Brain microvascular endothelial cell (primary cell): ENCODE measurements at regions of chr17 and their contacts with region 1.

Region 1: DNA sequence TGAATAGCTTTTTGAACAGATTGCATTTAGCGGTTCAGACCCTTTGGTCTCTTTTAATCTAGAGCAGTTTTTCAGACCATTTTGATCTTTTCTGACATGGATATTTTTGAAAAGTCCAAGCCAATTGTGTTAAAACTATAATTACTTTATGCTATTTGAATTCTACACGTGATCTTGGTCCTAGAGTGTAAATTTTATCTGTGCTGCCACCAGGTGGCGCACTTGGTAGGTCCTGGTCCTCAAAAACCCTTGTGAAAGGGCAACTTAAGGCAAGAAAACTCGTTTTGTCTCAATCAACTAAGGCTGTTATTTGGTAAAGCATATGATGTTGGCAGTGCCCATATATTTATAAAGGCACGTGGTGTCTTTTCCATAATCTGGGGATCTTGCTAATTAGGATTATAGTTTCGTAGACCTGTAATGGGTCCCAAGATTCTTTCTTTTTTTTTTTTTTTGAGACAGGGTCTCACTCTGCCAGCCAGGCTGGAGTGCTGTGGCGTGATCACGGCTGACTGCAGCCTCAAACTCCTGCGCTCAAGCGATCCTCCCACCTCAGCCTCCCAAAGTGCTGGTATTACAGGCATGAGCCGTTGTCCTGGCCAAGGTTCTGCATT is 43.9 kb upstream of the TEX2 start:
- DNase-seq: peak; percentile 45
- H3K4me3 ChIP-seq: no peak overlapping the region
- H3K27ac ChIP-seq: no peak overlapping the region
- H3K27me3 ChIP-seq: no peaks in the 10 kb centered on the region
- CTCF ChIP-seq: peak; percentile 81

Region 2: GRCh38 chr17:64399071-64399766 is 92.3 kb after region 1 on chr17:
- in situ Hi-C with region 1: loop called (anchors 10 kb)
- DNase-seq: no peak
- H3K4me3 ChIP-seq: no peak overlapping the region
- H3K27ac ChIP-seq: no peak overlapping the region
- H3K27me3 ChIP-seq: no peaks in the 10 kb centered on the region
- CTCF ChIP-seq: no peak

Region 3: DNA sequence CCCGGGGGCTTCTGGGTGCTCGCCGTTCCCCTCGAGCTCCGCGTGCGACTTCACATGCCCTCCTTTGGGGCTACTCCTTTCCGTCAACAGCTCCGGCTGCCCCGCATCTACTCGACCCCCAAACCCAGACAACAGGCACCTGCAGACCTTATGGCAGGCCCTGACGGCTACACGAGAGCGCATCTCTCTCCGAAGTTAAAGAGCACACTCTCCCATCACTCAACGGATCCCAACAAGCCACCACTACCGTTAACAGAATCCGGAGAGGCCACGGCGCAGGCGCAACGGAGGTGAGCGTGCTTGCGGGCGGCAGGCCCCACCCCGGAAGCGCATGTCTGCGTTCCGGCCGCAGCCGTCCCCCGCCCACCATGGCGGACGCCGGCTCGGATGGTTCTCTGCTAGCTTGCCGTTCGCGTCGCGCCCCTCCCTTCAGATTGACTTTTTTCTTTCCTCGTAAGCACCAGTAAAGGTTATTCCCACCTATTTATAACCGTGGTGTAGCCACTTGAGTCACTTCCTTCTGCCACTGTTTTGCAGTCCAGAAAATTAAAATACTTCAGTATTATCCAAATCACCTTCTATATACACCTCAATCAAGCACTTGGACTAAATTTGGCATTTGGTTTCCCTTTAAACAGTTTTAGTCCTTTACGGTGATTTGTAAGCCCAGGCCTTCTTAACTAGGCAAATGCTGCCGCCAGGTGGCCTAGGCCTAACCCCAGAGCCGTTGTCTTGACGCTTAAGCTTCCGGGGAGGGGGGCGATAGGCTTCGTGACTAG is 190.0 kb after region 1 on chr17 and contains the start of gene POLG2:
- in situ Hi-C with region 1: loop called (anchors 10 kb)
- DNase-seq: peak; percentile 87
- H3K4me3 ChIP-seq: peak within 1 kb of the TSS; percentile 83
- H3K27ac ChIP-seq: peak within 1 kb of the TSS; percentile 67
- H3K27me3 ChIP-seq: no peaks in the 10 kb centered on the region
- CTCF ChIP-seq: peak; percentile 70